Left ventricle myocardium superior (tissue), 1 donor: ENCODE measurements at regions of chr3 and their contacts with region 1.

Region 1: DNA sequence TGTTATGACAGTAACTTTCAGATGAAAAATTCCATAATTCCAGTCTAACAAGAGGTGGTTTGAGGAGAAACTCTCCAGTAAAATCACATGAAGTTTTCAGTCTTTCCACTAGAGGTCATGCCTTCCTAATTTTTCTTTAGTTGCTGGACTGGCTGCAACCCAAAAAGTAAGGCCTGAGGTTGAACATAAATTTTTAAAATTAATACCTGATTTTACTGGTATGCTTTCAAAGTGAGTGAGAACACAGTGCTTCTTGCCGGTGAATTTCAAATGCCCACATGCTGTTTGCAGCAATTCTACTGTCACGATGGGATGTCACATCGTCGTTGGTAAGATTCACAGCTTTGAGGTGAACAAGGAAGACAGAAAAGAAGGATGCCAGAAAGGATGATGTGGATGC is 89.0 kb upstream of the FGF12 start:
- DNase-seq: no peak
- ATAC-seq: peak; percentile 32

Region 2: DNA sequence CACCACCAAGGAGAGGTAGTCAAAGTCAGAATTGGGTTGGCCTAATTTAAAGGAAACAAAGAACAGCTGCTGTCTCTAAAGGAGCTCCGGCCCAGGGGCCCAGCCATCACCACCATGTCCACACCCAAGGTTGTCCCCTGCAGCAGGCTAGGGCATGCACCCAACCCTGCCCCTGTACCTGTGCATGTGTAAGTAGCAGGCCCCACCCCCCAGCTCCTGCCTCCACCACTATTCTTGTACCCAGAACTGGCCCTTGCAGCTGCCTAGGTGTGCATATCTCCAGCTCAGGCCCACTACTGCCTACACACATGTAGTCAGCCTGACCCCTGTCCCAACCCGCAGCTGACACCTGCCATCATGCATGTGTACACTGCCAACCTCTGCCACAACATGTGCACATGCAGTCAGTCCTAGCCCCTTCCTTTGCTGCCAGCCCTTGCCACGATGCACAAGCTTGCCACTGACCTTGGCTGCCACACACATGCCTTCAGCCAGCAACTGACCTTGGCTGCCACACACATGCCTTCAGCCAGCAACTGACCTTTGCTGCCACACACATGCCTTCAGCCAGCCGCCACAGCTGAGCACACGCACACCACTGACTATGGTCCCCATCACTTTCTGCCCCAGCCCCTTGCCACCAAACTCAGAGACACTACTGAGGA is 128.7 kb before region 1 on chr3:
- intact Hi-C with region 1: no loop called
- DNase-seq: peak; percentile 69
- ATAC-seq: peak; percentile 87

Region 3: GRCh38 chr3:192879336-192880106 is 63.2 kb after region 1 on chr3:
- intact Hi-C with region 1: no loop called
- DNase-seq: no peak
- ATAC-seq: peak; percentile 63

Region 4: DNA sequence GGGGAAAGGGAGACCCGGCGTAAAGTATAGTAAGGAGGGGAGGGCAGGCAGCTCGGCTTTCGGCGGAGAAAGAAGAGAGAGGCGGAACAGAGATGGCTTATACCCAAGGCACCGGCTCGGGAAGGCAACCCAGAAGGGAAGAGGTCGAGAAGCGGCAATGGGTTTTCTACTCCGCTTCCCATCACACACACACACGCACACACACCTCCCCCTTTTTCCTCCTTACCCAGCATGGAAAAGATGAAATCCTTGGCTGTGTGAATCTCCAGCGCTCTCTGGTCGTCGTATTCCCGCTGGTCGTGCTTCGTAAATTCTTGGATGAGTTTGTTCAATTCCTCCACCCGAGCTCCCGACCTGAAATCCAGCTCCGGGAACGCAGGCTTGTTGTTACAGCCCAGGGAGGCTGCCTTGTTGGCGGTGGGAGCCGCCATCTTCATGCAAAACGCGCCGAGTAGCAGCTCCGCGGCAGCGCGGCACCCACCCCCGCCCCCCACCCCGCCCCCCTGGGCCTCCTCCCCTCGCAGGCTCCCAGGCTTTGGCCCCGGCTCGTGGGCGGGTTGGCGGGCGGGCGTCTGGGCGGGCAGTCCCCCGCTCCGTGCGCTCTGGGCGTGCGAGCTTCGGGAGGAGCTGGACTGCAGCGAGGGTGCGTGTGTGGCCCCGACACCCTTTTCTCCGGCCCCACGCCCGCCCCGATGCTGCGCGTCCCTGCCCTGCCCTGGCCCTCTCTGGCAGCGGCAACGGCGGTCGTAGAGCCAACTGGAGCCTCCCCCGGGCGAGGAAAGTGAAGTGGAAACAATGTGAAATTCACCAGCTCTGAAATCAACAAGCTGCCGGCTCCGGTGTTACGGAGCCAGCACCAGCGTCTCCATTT is 101.3 kb after region 1 on chr3 and contains the start of gene MB21D2:
- intact Hi-C with region 1: loop called (anchors 10 kb)
- DNase-seq: peak; percentile 86
- ATAC-seq: peak; percentile 92
- total RNA-seq, gene MB21D2: 1.8 TPM

Region 5: DNA sequence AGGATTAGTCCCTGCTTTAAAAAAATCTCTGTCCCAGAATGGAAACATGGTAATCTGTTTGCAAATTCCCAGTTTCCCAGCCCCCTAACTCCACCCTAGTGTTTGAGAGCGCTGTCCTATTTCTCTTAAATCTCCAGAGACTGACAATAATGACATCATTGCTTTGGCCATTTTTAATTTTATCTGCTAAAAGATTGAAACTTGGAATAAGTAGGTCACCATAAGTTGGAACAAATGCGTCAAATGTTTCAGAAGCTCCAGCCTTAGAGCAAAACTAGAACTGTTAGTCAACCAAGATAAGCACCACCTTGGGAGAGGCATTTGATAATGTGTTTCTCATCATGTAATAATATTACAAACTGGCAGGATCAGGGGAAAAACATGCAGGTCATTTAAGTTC is 127.0 kb after region 1 on chr3:
- intact Hi-C with region 1: no loop called
- DNase-seq: no peak
- ATAC-seq: peak; percentile 93

Region 6: GRCh38 chr3:193040836-193041672 is 224.7 kb after region 1 on chr3:
- intact Hi-C with region 1: loop called (anchors 5 kb)
- DNase-seq: no peak
- ATAC-seq: peak; percentile 28

Region 7: GRCh38 chr3:193572426-193572908 is 756.1 kb after region 1 on chr3:
- intact Hi-C with region 1: loop called (anchors 2 kb)
- DNase-seq: peak; percentile 40
- ATAC-seq: peak; percentile 73